ENCODE measurements at regions of chr4 and their contacts with region 1.

Region 1: DNA sequence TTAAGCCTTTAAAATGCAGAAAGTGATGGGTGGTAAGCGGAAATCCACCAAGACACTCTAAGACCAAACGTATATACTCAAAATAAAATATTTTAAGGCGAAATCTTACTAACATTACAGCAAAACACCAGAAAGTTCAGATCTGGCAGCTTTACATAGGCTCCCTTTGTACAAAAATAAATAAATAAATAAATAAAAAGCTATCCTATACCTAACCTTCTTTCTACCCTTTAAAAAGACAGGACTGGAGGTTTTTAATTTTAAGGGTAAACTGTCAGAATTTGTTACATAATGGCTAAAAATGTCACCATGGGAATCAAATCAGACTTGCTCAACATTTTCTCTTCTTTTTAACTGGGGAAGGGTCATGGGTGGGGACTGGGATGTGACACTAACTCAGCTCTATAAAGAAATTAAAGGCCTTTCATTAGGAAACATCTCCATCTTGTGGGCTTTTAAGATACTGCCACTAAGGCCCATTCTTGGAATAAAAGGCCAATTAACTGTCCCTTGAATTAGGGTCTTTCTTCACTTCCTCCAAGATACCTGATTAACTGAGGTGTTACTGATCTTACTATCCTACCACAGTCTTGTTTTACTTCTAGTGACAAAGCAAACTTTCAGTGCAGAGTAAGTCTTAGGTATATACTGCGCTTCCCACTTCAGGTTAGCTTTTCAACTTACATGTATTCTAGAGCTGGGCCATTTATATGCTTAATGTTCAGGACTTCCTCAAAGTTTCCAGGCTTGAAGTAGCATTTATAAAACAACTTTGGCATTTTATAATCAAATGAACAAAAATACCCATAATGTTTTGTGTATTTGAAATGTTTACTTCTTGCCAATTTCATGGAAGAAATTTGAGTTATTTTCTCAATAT is 13.3 kb downstream of the HNRNPD start:
- DNase-seq: peak in 2 of 35 experiments; percentile 31 to 56
- ATAC-seq: peak; percentile 59 to 69 (median 66)
- H3K4me3 ChIP-seq: no peak overlapping the region
- H3K4me3 Mint-ChIP-seq: peak overlapping the region in 1 of 3 donors; percentile 32
- H3K27ac ChIP-seq: peak overlapping the region; percentile 6
- H3K27ac Mint-ChIP-seq: no peak overlapping the region
- H3K4me1 ChIP-seq: peaks cover 24 to 56% of the 10 kb centered on the region in 2 experiments
- H3K4me1 Mint-ChIP-seq: peaks cover 87 to 91% (median 91%) of the 10 kb centered on the region in 3 donors
- H3K27me3 ChIP-seq: no peaks in the 10 kb centered on the region
- H3K27me3 Mint-ChIP-seq: no peaks in the 10 kb centered on the region

Region 2: GRCh38 chr4:82373816-82374625 is 13.5 kb after region 1 on chr4 and contains the start of gene HNRNPD:
- CTCF ChIA-PET with region 1: interaction called, 3 to 29 read pairs
- POLR2A ChIA-PET with region 1: interaction called, 4 to 5 read pairs
- DNase-seq: peak; percentile 76 to 97 (median 89)
- ATAC-seq: peak; percentile 86 to 90 (median 88)
- H3K4me3 ChIP-seq: peak within 1 kb of the TSS; percentile 90 to 94
- H3K4me3 Mint-ChIP-seq: peak within 1 kb of the TSS; percentile 91 to 99 (median 97)
- H3K27ac ChIP-seq: peak within 1 kb of the TSS; percentile 97
- H3K27ac Mint-ChIP-seq: peak within 1 kb of the TSS; percentile 99
- H3K4me1 ChIP-seq: peaks cover 22 to 35% of the 10 kb centered on the region in 2 experiments
- H3K4me1 Mint-ChIP-seq: peaks cover 49 to 66% (median 49%) of the 10 kb centered on the region in 3 donors
- H3K27me3 ChIP-seq: no peaks in the 10 kb centered on the region
- H3K27me3 Mint-ChIP-seq: no peaks in the 10 kb centered on the region
- total RNA-seq, gene HNRNPD: 193 to 274 (median 202) TPM

Region 3: GRCh38 chr4:82403725-82404124 is 43.2 kb after region 1 on chr4:
- CTCF ChIA-PET with region 1: no interaction called
- POLR2A ChIA-PET with region 1: no interaction called
- DNase-seq: no peak
- ATAC-seq: no peak
- H3K4me3 ChIP-seq: no peak overlapping the region
- H3K4me3 Mint-ChIP-seq: no peak overlapping the region
- H3K27ac ChIP-seq: no peak overlapping the region
- H3K27ac Mint-ChIP-seq: no peak overlapping the region
- H3K4me1 ChIP-seq: no peaks in the 10 kb centered on the region
- H3K4me1 Mint-ChIP-seq: no peaks in the 10 kb centered on the region
- H3K27me3 ChIP-seq: peaks cover 0 to 3% of the 10 kb centered on the region in 2 experiments
- H3K27me3 Mint-ChIP-seq: peaks cover 0 to 9% of the 10 kb centered on the region in 2 donors

Region 4: GRCh38 chr4:82437285-82438005 is 76.9 kb after region 1 on chr4:
- CTCF ChIA-PET with region 1: no interaction called
- POLR2A ChIA-PET with region 1: no interaction called
- DNase-seq: no peak
- ATAC-seq: no peak
- H3K4me3 ChIP-seq: no peak overlapping the region
- H3K4me3 Mint-ChIP-seq: no peak overlapping the region
- H3K27ac ChIP-seq: no peak overlapping the region
- H3K27ac Mint-ChIP-seq: no peak overlapping the region
- H3K4me1 ChIP-seq: peaks cover 0 to 19% of the 10 kb centered on the region in 2 experiments
- H3K4me1 Mint-ChIP-seq: peaks cover 68 to 85% (median 81%) of the 10 kb centered on the region in 3 donors
- H3K27me3 ChIP-seq: no peaks in the 10 kb centered on the region
- H3K27me3 Mint-ChIP-seq: no peaks in the 10 kb centered on the region

Region 5: DNA sequence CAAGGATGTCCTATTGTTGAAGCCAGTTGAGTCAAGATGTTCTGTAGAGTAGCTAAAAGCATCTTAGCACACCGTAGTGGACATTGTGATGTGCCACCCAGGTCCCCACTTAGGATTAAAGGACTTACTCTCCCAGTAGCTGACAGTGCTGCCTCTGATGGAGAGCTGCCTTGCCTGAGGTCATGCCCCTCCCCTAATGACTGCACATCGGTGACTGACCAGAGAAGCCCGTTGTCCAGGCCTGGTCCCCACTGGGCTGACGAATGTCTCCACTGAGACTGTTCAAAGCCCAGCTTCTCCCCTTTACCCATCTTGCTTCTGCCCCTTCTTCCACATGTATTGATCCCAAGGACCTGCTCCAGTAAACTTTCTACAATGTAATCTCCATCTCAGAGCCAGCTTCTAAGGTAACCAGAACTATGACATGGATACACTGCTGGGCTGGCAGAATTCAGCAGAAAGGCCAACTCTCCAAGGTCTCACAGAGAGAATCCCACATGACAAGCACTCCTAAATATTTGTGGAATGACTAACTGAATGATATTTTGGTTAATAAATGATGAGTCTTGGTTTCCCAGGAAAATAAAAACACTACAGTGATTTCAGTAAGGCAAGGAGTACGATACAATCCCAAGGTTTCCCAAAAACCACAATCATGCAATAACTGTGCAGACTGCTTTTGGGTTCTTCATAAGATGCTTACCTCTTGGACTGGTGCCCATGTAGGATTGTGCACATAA is 283.6 kb after region 1 on chr4:
- CTCF ChIA-PET with region 1: no interaction called
- POLR2A ChIA-PET with region 1: no interaction called
- DNase-seq: no peak
- ATAC-seq: no peak
- H3K4me3 ChIP-seq: no peak overlapping the region
- H3K4me3 Mint-ChIP-seq: no peak overlapping the region
- H3K27ac ChIP-seq: no peak overlapping the region
- H3K27ac Mint-ChIP-seq: no peak overlapping the region
- H3K4me1 ChIP-seq: no peaks in the 10 kb centered on the region
- H3K4me1 Mint-ChIP-seq: no peaks in the 10 kb centered on the region
- H3K27me3 ChIP-seq: peaks cover 0 to 9% of the 10 kb centered on the region in 2 experiments
- H3K27me3 Mint-ChIP-seq: peaks cover 4 to 7% of the 10 kb centered on the region in 2 donors